CD4-positive, alpha-beta memory T cell (primary cell): ENCODE measurements at regions of chr1 and their contacts with region 1.

Region 1: DNA sequence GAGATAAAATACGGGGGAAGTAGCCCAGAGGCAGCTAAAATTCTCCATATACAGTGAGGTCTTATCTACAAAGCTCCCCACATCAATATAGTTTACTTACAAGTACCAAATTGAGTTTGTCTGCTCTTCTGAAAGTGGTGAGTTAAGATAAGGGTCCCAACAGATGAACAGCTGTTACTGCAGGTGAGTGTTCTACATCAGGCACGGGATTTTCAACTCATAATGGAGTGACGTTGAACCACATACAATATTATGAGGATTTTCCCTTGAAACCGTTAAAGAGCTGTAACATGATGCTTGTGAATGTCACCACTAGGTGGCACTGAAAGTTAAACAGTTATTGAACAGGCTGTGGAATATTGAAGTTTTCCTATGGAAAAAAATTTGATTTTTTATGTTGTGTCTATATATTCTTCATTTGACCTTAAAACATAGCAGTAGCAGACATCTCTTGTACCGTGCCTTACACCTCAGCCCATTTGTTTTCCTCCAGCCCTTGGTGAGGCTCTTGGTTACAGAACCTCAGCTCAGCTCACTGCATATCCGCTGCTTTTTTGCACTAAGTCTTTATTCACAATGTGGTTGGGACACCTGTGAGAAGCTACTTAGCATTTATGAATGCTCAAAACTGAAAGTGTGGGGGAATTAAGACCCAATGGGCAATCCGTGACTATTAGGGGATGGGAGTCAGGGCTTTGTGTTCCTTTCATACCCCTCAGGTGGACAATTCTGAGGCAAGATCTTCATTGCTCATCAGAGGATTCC is 23.2 kb downstream of the CD1D start:
- DNase-seq: peak in 4 of 5 donors; percentile 31 to 53 (median 36)
- H3K4me3 ChIP-seq: no peak overlapping the region
- H3K4me3 Mint-ChIP-seq: peak overlapping the region in 1 of 8 donors; percentile 43
- H3K27ac ChIP-seq: no peak overlapping the region
- H3K27ac Mint-ChIP-seq: no peak overlapping the region
- H3K4me1 ChIP-seq: peaks cover 10% of the 10 kb centered on the region
- H3K4me1 Mint-ChIP-seq: peaks cover 7 to 11% (median 9%) of the 10 kb centered on the region in 4 donors
- H3K27me3 ChIP-seq: no peaks in the 10 kb centered on the region
- H3K27me3 Mint-ChIP-seq: peaks cover 13 to 19% of the 10 kb centered on the region in 2 donors

Region 2: GRCh38 chr1:158149577-158150269 is 54.2 kb before region 1 on chr1:
- CTCF ChIA-PET with region 1: no interaction called
- POLR2A ChIA-PET with region 1: no interaction called
- intact Hi-C with region 1: no loop called
- DNase-seq: peak; percentile 54 to 65 (median 60)
- H3K4me3 ChIP-seq: peak overlapping the region; percentile 45 to 81
- H3K4me3 Mint-ChIP-seq: peak overlapping the region; percentile 93 to 99 (median 97)
- H3K27ac ChIP-seq: peak overlapping the region; percentile 46
- H3K27ac Mint-ChIP-seq: peak overlapping the region; percentile 81 to 98 (median 96)
- H3K4me1 ChIP-seq: peaks cover 16% of the 10 kb centered on the region
- H3K4me1 Mint-ChIP-seq: peaks cover 24 to 35% (median 28%) of the 10 kb centered on the region in 4 donors
- H3K27me3 ChIP-seq: no peaks in the 10 kb centered on the region
- H3K27me3 Mint-ChIP-seq: peaks cover 0 to 5% of the 10 kb centered on the region in 2 donors

Region 3: GRCh38 chr1:158185770-158186705 is 17.8 kb before region 1 on chr1:
- CTCF ChIA-PET with region 1: interaction called, 10 read pairs
- POLR2A ChIA-PET with region 1: no interaction called
- intact Hi-C with region 1: no loop called
- DNase-seq: no peak
- H3K4me3 ChIP-seq: no peak overlapping the region
- H3K4me3 Mint-ChIP-seq: no peak overlapping the region
- H3K27ac ChIP-seq: no peak overlapping the region
- H3K27ac Mint-ChIP-seq: no peak overlapping the region
- H3K4me1 ChIP-seq: peaks cover 5% of the 10 kb centered on the region
- H3K4me1 Mint-ChIP-seq: peaks cover 0 to 10% (median 5%) of the 10 kb centered on the region in 4 donors
- H3K27me3 ChIP-seq: peaks cover 7% of the 10 kb centered on the region
- H3K27me3 Mint-ChIP-seq: peaks cover 34 to 41% of the 10 kb centered on the region in 2 donors

Region 4: DNA sequence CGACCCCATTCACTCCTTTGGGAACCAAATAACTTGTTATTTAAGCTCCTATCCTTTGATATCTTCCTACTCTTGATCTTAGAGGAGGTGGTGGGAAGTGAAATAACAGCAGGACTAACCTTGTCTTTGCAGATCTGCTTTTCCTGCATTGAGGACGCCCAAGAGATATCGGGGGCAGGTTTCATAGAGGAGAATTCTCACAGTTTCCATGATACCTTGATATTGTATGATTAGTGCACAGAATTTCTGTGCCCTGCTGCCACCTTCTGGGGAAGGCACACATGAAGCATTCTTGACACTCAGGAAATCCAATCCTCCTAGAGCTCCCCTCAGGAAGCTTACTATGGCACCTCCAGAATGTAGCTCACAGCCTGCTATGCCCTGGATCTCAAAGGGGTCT is 125.9 kb after region 1 on chr1:
- CTCF ChIA-PET with region 1: interaction called, 33 read pairs
- POLR2A ChIA-PET with region 1: no interaction called
- intact Hi-C with region 1: loop called (anchors 1 kb)
- DNase-seq: peak in 2 of 5 donors; percentile 5 to 7
- H3K4me3 ChIP-seq: no peak overlapping the region
- H3K4me3 Mint-ChIP-seq: no peak overlapping the region
- H3K27ac ChIP-seq: no peak overlapping the region
- H3K27ac Mint-ChIP-seq: no peak overlapping the region
- H3K4me1 ChIP-seq: peaks cover 11% of the 10 kb centered on the region
- H3K4me1 Mint-ChIP-seq: peaks cover 7 to 15% (median 10%) of the 10 kb centered on the region in 4 donors
- H3K27me3 ChIP-seq: no peaks in the 10 kb centered on the region
- H3K27me3 Mint-ChIP-seq: peaks cover 9 to 15% of the 10 kb centered on the region in 2 donors

Region 5: GRCh38 chr1:158527190-158527815 is 323.4 kb after region 1 on chr1:
- CTCF ChIA-PET with region 1: interaction called, 3 read pairs
- POLR2A ChIA-PET with region 1: no interaction called
- intact Hi-C with region 1: loop called (anchors 1 kb)
- DNase-seq: peak in 3 of 5 donors; percentile 3 to 8 (median 6)
- H3K4me3 ChIP-seq: no peak overlapping the region
- H3K4me3 Mint-ChIP-seq: no peak overlapping the region
- H3K27ac ChIP-seq: no peak overlapping the region
- H3K27ac Mint-ChIP-seq: no peak overlapping the region
- H3K4me1 ChIP-seq: no peaks in the 10 kb centered on the region
- H3K4me1 Mint-ChIP-seq: no peaks in the 10 kb centered on the region
- H3K27me3 ChIP-seq: no peaks in the 10 kb centered on the region
- H3K27me3 Mint-ChIP-seq: peaks cover 10 to 15% of the 10 kb centered on the region in 2 donors

Region 6: GRCh38 chr1:159089184-159089791 is 885.4 kb after region 1 on chr1:
- CTCF ChIA-PET with region 1: interaction called, 22 read pairs
- POLR2A ChIA-PET with region 1: no interaction called
- intact Hi-C with region 1: loop called (anchors 1 kb)
- DNase-seq: peak in 4 of 5 donors; percentile 39 to 57 (median 40)
- H3K4me3 ChIP-seq: no peak overlapping the region
- H3K4me3 Mint-ChIP-seq: no peak overlapping the region
- H3K27ac ChIP-seq: no peak overlapping the region
- H3K27ac Mint-ChIP-seq: no peak overlapping the region
- H3K4me1 ChIP-seq: peaks cover 7% of the 10 kb centered on the region
- H3K4me1 Mint-ChIP-seq: peaks cover 6 to 32% (median 22%) of the 10 kb centered on the region in 4 donors
- H3K27me3 ChIP-seq: no peaks in the 10 kb centered on the region
- H3K27me3 Mint-ChIP-seq: no peaks in the 10 kb centered on the region